Activated CD8-positive, alpha-beta T cell treated with anti-CD3 and anti-CD28 coated beads for 36 hours (primary cell): ENCODE measurements at regions of chr17 and their contacts with region 1.

Region 1: GRCh38 chr17:32461853-32462617 is 17.7 kb downstream of the PSMD11 start:
- DNase-seq: peak; percentile 85
- ATAC-seq: peak; percentile 69
- H3K4me3 Mint-ChIP-seq: no peak overlapping the region
- H3K27ac Mint-ChIP-seq: peak overlapping the region; percentile 50
- H3K4me1 Mint-ChIP-seq: peaks cover 35% of the 10 kb centered on the region
- H3K27me3 Mint-ChIP-seq: no peaks in the 10 kb centered on the region
- CTCF ChIP-seq: peak; percentile 62

Region 2: DNA sequence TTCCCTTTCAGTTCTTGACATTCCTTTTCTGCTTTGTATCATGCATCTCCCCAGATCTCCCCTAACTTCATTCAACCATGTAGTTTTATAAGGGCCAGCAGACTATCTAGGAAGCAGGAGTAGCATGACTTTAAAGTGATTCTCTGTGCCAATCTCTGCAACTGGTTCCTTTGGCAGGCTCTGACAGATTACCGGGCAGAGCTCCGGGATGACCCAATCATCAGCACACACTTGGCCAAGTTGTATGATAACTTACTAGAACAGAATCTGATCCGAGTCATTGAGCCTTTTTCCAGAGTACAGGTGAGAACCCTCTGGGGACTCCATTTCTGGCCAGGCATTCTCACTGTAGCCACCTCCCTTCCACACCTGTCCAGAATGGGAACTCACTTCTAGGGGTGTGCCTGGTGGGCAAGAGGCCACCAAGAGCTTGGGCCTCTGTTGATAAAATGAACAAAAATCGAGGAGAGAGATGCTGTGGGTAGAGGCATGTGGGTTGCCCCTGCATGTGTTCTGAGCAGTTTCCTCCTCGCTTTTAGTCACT is 17.1 kb after region 1 on chr17:
- CTCF ChIA-PET with region 1: interaction called, 70 read pairs
- POLR2A ChIA-PET with region 1: interaction called, 8 read pairs
- intact Hi-C with region 1: no loop called
- DNase-seq: no peak
- ATAC-seq: no peak
- H3K4me3 Mint-ChIP-seq: no peak overlapping the region
- H3K27ac Mint-ChIP-seq: peak overlapping the region; percentile 32
- H3K4me1 Mint-ChIP-seq: peaks cover 10% of the 10 kb centered on the region
- H3K27me3 Mint-ChIP-seq: no peaks in the 10 kb centered on the region
- CTCF ChIP-seq: no peak

Region 3: DNA sequence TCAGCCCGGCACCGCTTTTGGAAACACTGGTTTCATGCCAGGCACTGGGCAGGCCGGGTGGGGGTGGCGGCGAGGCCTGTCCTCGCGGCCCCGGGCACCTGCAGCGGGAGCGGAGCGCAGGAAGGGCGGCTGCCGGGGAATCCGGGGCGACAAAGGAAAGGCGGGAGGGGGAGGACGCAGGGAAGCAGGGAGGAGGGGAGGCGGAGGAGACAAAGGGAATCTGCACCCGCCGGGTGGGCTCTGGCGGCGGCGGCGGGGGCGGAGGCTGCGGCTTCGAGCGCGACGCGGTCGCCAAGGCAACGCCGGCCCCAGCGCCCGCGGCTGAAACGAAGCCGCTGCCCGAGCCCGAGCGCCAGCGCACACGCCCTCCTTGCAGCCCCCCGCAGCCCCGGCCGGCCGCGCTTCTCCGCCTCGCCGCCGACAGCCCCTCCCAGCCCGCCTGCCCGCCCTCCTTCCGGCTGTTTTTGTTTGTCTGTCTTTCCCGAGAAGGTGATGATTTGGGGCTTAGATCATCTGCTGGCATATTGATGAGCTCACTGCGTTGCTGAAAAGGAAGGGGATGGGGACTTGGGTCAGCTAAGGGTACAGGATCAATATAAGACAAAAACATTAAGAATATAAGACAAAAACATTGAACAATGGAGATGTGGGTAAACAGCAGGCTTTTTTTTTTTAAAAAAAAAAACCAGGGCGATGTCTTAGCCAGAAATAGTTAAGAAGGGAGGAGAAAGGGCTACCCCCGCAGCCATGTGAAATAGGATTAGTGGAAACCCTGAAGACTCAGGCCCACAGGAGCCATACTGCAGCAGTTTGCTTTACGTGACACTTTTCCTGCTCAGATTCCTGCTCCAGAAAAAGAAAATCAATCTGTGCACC is 57.4 kb after region 1 on chr17:
- CTCF ChIA-PET with region 1: interaction called, 21 read pairs
- POLR2A ChIA-PET with region 1: no interaction called
- intact Hi-C with region 1: no loop called
- DNase-seq: peak; percentile 71
- ATAC-seq: peak; percentile 4
- H3K4me3 Mint-ChIP-seq: peak overlapping the region; percentile 74
- H3K27ac Mint-ChIP-seq: peak overlapping the region; percentile 91
- H3K4me1 Mint-ChIP-seq: peaks cover 84% of the 10 kb centered on the region
- H3K27me3 Mint-ChIP-seq: no peaks in the 10 kb centered on the region
- CTCF ChIP-seq: no peak

Region 4: DNA sequence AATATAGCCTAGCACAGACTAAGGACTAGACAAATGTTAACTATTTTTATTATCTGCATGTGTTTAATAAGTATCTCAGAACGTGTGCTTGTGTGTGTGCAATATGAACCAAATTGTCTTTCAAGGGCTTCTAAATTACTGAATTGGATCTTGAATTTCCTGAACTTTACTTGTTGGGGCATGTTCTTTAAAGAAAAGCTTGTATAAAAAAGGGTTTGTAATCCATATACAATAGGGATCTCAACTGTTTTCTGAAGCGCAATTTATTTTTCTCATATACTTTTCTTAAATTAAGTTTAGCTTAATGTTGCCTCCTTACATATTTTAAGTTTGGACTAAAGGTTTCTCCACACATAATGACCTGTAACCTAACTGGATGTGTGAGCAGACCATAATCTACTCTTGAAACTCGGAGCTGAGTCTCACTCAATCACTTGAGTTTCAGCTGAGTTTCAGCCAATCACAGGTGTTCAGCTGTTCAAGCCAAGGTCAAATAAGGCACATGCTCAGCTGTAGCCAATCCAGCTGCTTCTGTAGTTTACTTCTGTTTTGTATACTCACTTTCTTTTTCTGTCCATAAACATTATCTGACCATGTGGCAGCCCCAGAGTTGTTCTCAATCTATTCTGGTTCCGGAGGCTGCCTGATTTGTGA is 97.1 kb after region 1 on chr17:
- CTCF ChIA-PET with region 1: interaction called, 14 read pairs
- POLR2A ChIA-PET with region 1: no interaction called
- intact Hi-C with region 1: no loop called
- DNase-seq: no peak
- ATAC-seq: no peak
- H3K4me3 Mint-ChIP-seq: no peak overlapping the region
- H3K27ac Mint-ChIP-seq: no peak overlapping the region
- H3K4me1 Mint-ChIP-seq: peaks cover 29% of the 10 kb centered on the region
- H3K27me3 Mint-ChIP-seq: no peaks in the 10 kb centered on the region
- CTCF ChIP-seq: no peak

Region 5: GRCh38 chr17:32609085-32609484 is 147.1 kb after region 1 on chr17:
- CTCF ChIA-PET with region 1: interaction called, 40 read pairs
- POLR2A ChIA-PET with region 1: no interaction called
- intact Hi-C with region 1: no loop called
- DNase-seq: peak; percentile 88
- ATAC-seq: peak; percentile 100
- H3K4me3 Mint-ChIP-seq: no peak overlapping the region
- H3K27ac Mint-ChIP-seq: no peak overlapping the region
- H3K4me1 Mint-ChIP-seq: peaks cover 6% of the 10 kb centered on the region
- H3K27me3 Mint-ChIP-seq: no peaks in the 10 kb centered on the region
- CTCF ChIP-seq: peak; percentile 73

Region 6: GRCh38 chr17:32755045-32755805 is 293.2 kb after region 1 on chr17:
- CTCF ChIA-PET with region 1: interaction called, 31 read pairs
- POLR2A ChIA-PET with region 1: no interaction called
- intact Hi-C with region 1: no loop called
- DNase-seq: no peak
- ATAC-seq: peak; percentile 69
- H3K4me3 Mint-ChIP-seq: no peak overlapping the region
- H3K27ac Mint-ChIP-seq: no peak overlapping the region
- H3K4me1 Mint-ChIP-seq: peaks cover 15% of the 10 kb centered on the region
- H3K27me3 Mint-ChIP-seq: no peaks in the 10 kb centered on the region
- CTCF ChIP-seq: peak; percentile 59